ENCODE measurements at regions of chr5 and their contacts with region 1.

Region 1: DNA sequence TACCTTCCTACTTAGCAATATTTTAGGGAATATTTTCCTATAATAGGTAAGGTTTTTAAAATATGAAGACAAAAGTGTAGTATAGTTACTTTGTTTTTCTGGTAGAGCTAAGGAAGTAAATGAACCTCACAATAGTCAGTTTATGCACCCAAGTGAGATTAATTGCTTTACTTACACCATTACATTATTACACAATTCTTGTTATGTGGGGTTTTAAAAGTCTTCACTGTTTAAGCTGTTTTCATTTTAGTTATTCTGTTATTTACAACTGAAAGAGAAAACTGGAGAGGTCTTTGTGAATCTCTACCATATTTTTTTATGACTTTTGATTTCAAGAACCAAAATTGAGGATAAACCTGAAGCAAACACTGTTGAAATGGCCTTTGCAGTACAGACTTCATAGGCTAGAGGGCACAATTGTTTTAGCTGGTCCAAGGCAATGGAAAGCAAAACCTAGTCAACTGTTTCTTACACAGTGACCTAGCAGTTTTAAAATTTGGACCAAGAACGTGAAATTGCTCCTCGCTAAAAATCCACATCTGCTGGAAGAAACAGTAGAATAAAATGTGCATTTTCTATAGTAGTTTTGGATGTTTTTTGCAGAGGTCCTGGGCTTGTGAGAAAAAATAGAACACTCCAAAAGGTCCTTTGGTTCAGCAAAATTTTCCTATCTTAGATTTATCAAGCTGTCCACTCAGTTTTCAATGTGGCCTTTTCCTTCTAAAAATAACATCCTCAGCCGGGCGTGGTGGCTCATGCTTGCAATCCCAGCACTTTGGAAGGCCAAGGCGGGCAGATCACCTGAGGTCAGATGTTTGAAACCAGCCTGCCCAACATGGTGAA is 66.4 kb upstream of the FER start:
- DNase-seq: no peak
- H3K4me3 ChIP-seq: no peak overlapping the region
- H3K27ac ChIP-seq: no peak overlapping the region
- H3K4me1 ChIP-seq: peaks cover 3 to 12% (median 7%) of the 10 kb centered on the region in 4 experiments
- H3K27me3 ChIP-seq: no peaks in the 10 kb centered on the region
- CTCF ChIP-seq: peak in 2 of 3 experiments; percentile 62 to 82; a peak in 3 of 4 replicates
- EP300 ChIP-seq: no peak
- POLR2A ChIP-seq: no peak
- RAD21 ChIP-seq: peak; percentile 90 to 93

Region 2: DNA sequence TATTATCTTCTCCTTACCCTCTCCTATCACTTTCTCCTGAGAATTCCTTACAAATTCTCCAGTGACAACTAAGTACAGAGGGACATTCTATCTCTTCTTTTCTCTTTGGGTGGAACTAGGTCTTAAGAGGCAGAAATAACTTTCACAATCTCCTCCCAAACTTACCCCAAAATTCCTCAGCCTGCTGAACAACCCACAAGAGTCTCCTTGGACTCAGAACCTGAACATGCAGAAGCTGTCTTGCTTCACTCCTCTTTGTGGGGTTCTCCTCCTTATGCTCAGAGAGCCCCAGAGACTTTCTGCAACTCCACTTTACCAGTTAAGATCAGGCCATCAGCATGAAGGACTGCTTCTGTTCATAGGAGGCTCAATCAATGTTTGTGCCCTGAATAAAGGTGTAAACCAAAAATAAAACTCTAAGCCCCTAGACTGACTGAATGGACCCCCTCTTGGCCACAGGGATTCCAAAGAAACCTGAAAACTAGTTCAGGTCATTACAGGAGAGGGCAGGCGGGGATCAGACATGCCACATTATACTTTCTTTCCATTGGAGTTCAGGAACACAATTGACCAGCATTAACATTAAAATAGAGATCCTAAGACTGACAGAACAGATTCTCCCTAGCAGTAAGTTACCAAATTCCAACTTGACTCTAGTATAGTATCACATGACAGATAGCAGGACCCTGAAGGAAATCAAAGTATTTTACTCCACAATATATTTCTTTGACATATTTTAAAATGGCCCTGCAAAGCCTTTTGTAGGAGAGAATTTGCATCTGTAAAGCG is 119.7 kb before region 1 on chr5:
- CTCF ChIA-PET with region 1: no interaction called
- POLR2A ChIA-PET with region 1: no interaction called
- DNase-seq: no peak
- H3K4me3 ChIP-seq: no peak overlapping the region
- H3K27ac ChIP-seq: no peak overlapping the region
- H3K4me1 ChIP-seq: peaks cover 0 to 5% (median 3%) of the 10 kb centered on the region in 4 experiments; a peak in 4 of 7 replicates
- H3K27me3 ChIP-seq: no peaks in the 10 kb centered on the region
- CTCF ChIP-seq: no peak
- EP300 ChIP-seq: no peak
- POLR2A ChIP-seq: no peak
- RAD21 ChIP-seq: peak; percentile 20 to 21

Region 3: DNA sequence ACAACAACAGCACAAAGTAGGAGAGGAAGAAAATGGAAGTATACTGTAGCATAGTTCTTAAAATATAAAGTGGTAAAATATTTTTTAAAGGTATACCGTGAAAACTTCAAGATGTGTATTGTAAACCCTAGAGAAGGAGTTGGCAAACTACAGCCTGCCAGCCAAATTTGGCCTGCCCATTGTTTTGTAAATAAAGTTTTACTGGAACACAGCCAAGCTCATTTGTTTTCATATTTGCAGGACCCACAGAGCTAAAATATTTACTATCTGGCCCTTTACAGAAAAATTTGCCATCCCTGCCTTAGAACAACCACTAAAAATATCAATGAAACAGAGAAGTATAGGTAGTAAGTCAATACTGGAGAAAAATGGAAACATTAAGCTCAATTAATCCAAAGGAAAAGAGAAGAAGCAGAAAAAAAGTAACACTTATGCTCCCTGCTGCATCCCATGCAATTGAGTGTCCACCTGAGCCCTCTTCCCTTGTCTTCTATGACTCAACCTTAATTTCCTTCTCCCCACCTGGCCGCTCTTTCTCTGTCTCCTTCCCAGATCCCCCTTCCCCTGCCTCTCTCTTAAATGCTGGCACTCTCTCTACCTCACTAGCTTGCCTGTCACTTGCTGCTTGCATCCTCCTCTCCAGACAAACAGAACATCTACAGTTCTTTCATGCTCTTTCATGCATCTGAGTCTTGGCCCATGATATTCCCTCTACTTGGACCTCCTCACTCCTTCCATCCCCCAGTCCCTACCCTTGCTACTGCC is 15.8 kb after region 1 on chr5:
- CTCF ChIA-PET with region 1: interaction called, 13 read pairs
- POLR2A ChIA-PET with region 1: interaction called, 3 read pairs
- DNase-seq: no peak
- H3K4me3 ChIP-seq: no peak overlapping the region; a peak in 1 of 8 replicates
- H3K27ac ChIP-seq: no peak overlapping the region
- H3K4me1 ChIP-seq: peaks cover 0 to 4% (median 1%) of the 10 kb centered on the region in 4 experiments; a peak in 2 of 7 replicates
- H3K27me3 ChIP-seq: no peaks in the 10 kb centered on the region
- CTCF ChIP-seq: no peak
- EP300 ChIP-seq: no peak
- POLR2A ChIP-seq: no peak
- RAD21 ChIP-seq: no peak

Region 4: GRCh38 chr5:108753877-108754276 is 72.6 kb after region 1 on chr5:
- CTCF ChIA-PET with region 1: interaction called, 12 read pairs
- POLR2A ChIA-PET with region 1: interaction called, 21 read pairs
- DNase-seq: no peak
- H3K4me3 ChIP-seq: no peak overlapping the region
- H3K27ac ChIP-seq: no peak overlapping the region
- H3K4me1 ChIP-seq: no peaks in the 10 kb centered on the region; a peak in 1 of 7 replicates
- H3K27me3 ChIP-seq: no peaks in the 10 kb centered on the region
- CTCF ChIP-seq: no peak
- EP300 ChIP-seq: no peak
- POLR2A ChIP-seq: no peak
- RAD21 ChIP-seq: no peak

Measured in H1 (cell line).